Ovary (tissue), 10 donors: ENCODE measurements at regions of chr12 and their contacts with region 1.

Region 1: DNA sequence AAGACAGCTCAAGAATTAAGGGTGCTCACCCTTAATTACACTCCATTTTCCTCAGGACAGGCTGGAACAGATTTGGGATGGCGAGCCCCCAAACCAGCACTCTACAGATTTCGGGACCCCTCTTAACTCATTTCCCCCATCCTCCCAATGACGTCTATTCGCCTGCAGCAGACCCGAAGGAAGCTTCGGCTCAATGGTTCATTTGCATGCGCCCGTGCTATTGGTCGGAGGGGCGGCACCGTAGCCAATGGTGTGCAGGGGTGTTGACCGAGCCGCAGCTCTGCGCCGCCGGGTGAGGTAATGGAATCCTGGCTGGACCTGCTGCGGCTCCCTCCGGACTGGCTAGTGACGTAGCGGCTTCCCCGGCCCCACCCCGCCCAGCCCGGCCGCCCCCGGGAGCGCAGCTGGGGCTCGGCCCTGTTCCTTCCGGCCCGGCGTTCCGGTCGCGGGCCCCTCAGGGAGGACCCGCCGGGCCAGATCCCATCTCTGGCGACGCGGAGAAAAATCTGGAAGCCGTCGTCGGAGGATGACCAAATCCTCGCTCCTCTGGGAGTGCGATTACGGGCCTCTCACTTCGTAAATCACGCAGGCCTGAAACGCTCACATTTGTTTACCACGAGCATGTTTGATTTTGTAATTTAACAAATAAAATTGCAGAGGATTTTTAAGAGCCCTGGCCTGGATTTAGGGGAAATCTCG is 18.3 kb upstream of the NR4A1 start:
- DNase-seq: peak; percentile 97 to 99 (median 98)
- H3K4me3 ChIP-seq: peak overlapping the region; percentile 27
- H3K27ac ChIP-seq: peak overlapping the region; percentile 88 to 91
- H3K4me1 ChIP-seq: peaks cover 2% of the 10 kb centered on the region
- H3K27me3 ChIP-seq: no peaks in the 10 kb centered on the region
- CTCF ChIP-seq: no peak
- EP300 ChIP-seq: peak; percentile 69
- POLR2A ChIP-seq: peak; percentile 87

Region 2: DNA sequence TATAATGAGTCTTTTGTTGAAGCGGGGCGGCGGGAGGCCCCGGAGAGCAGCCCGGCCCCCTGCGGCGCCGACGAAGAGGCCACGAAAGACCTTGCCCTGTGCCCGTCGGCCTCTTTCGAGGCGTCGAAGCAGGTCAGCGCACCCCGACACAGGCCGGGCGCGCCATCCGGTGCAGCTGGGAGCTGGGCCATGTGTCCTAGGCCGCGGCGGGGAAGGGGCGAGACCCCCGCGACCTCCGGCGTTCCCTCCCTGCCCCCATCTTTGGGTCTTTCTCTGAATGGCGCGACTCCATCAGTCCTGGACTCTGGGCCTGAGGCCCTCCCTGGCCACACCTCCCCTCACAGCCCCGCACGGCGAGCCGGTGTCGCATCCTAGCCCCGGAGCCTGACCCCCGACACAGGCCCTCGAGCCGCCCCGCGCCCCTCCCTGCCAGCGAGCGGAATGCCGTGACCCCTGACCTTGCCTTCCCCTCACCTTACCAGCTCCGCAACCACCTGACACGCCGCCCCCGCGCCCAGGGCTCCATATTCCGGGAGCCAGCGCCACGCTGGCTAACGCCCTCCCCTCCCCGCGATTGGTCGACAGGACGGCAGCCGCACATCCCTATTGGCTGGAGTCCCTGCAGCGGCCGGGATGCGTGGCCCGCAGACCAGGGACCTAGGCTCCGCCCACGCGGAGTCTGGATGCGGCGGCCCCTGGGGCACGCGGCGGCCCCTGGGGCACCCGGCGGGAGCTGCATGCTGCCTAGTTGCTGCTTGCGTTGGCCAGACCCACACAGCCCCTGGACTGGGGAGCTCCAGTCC is 1006.9 kb before region 1 on chr12 and contains the start of gene SLC11A2:
- intact Hi-C with region 1: loop called in 1 of 4 experiments (anchors 5 kb)
- DNase-seq: peak; percentile 94 to 96 (median 95)
- H3K4me3 ChIP-seq: peak within 1 kb of the TSS; percentile 75
- H3K27ac ChIP-seq: peak within 1 kb of the TSS; percentile 30 to 75
- H3K4me1 ChIP-seq: peaks cover 6% of the 10 kb centered on the region
- H3K27me3 ChIP-seq: no peaks in the 10 kb centered on the region
- CTCF ChIP-seq: peak in 1 of 3 donors; percentile 8
- EP300 ChIP-seq: no peak
- POLR2A ChIP-seq: peak; percentile 43
- total RNA-seq, gene SLC11A2: 32.3 to 48.8 (median 41.1) TPM

Region 3: DNA sequence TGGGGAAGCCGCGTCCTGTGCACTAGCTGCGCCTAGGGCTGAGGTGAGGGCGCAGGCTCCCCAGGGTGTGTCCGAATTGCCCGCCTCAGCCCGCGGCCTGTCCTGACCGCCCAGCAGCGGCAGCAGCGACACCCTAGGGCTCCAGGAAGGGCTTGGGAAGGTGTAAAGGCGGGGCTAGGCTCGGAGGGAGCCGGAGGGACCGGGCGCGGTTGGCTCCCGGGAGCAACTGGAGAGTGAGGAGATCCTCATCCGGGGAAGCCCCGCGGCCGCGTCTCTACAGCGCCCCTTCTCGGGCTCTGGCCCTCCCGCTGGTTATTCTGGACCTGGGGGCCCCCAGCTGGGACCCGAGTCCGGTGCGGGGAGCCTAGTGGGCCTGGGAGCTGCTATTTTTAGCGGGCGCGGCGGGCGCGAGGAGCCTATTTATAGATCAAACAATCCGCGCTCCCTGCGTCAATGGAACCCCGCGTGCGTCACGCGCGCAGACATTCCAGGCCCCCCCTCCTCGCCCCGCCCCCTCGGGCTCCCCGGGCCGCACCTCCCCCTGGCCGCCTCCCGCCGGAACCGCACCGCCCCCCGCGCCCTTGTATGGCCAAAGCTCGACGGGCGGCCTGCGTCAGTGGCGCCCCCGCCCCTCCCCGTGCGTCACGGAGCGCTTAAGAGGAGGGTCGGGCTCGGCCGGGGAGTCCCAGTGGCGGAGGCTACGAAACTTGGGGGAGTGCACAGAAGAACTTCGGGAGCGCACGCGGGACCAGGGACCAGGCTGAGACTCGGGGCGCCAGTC is 18.0 kb after region 1 on chr12 and contains the start of gene NR4A1:
- intact Hi-C with region 1: loop called in 1 of 4 experiments (anchors 2 kb)
- DNase-seq: peak; percentile 99 to 100 (median 100)
- H3K4me3 ChIP-seq: peak within 1 kb of the TSS; percentile 73
- H3K27ac ChIP-seq: peak within 1 kb of the TSS; percentile 95 to 96
- H3K4me1 ChIP-seq: peaks cover 12% of the 10 kb centered on the region
- H3K27me3 ChIP-seq: no peaks in the 10 kb centered on the region
- CTCF ChIP-seq: peak in 2 of 3 donors; percentile 11 to 46
- EP300 ChIP-seq: peak; percentile 92
- POLR2A ChIP-seq: peak; percentile 98
- total RNA-seq, gene NR4A1: 142 to 1,603 (median 414) TPM

Region 4: DNA sequence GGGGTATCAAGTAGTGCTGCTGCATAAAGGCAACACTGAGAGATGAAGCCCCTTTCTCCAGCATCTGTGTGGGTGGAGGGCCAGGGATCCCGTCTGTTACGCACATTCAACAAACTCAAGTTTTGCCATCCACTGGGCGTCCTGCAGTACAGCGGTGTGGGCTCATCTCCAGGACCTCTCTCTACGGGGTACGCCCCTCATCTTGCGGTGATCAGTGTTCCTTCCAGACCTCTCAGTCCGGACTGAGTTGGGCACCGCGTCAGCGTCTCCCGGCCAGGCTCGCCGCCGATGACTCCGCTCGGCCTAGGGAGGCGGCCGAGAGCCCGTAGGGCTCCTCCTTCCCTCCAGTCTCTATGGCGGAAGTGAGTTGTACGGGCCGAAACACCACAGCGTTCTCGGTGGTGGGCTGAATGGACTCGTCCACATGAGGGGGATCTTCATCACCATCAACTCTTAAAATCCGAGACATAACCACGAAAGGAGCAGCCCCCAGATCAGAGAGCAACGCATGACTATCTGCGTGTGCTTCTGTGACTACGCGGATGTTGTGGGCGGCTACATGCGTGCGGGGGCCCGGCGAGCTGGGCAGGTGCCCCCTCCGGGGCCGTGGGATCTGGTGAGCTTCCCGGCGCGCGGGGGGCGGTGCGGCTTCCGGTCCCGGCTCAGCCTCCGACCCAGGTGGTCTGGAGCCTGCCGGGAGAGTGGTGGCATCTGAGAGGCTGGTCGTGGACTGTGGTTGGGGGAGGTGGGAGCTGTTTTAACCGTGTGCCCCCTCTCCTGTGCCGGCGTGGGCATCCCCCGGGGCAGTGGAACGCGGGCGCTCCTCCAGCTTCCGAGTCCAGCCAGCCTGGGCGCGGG is 36.6 kb after region 1 on chr12 and contains the start of gene ATG101:
- intact Hi-C with region 1: loop called in 1 of 4 experiments (anchors 5 kb)
- DNase-seq: peak; percentile 89 to 92 (median 90)
- H3K4me3 ChIP-seq: peak within 1 kb of the TSS; percentile 61
- H3K27ac ChIP-seq: peak within 1 kb of the TSS; percentile 50 to 82
- H3K4me1 ChIP-seq: peaks cover 7% of the 10 kb centered on the region
- H3K27me3 ChIP-seq: no peaks in the 10 kb centered on the region
- CTCF ChIP-seq: peak; percentile 63 to 83 (median 68)
- EP300 ChIP-seq: no peak
- POLR2A ChIP-seq: peak; percentile 77
- total RNA-seq, gene ATG101: 24.9 to 48.7 (median 28.9) TPM

Region 5: DNA sequence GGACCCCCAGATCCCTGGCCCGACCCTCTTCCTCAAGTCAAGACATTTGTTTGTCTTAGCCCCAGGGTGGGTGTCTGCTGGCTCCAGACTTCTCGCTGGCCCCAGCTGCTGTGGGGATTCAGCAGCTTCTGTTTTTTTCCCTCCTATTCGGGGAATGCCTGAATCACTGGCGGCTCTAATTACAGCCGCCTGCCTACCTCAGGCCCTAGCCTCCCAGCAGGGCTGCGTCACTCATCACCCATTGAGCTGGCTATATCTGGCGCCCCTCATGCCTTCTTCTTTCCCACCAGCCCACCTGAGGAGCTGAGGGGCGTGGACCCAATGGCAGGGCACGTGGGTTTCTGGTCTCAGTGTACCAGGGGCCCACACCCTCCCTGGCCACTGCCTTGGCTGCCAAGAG is 148.8 kb after region 1 on chr12:
- intact Hi-C with region 1: no loop called
- DNase-seq: no peak
- H3K4me3 ChIP-seq: no peak overlapping the region
- H3K27ac ChIP-seq: no peak overlapping the region
- H3K4me1 ChIP-seq: peaks cover 2% of the 10 kb centered on the region
- H3K27me3 ChIP-seq: no peaks in the 10 kb centered on the region
- CTCF ChIP-seq: no peak
- EP300 ChIP-seq: no peak
- POLR2A ChIP-seq: no peak